Activated CD4-positive, alpha-beta memory T cell treated with anti-CD3 and anti-CD28 coated beads, Interleukin-2, amount 10 ng/mL, durations not matched to agents 7 days and 5 days (primary cell): ENCODE measurements at regions of chr2 and their contacts with region 1.

Region 1: DNA sequence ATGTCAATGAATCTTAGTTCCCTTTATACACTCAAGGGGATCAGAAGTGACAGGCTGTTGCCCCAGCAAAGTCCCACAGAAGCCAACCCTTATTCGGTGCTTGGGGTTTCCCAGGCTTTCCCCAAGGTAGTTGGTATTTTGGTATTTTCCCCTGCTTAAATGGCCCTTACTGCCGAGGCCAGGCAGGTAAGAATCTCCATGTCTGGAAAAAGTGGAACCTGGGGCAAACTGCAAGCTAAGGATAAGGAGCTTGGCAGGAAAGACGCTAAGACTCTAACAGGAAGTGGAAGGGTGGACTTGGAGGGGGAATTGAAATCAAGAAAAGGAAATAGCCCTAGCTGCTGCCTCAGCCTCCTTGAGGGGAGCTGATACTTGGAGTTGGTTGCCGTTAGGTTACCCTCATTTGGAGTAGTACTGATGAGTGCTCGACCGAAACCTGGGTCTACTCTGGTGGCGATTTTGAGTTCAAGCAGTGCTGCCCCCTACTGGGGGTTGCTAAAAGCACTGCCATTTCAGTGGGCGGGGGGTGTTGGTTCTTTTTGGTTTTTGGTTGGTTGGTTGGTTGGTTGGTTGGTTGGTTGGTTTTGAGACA is 3.3 kb upstream of the GPBAR1 start:
- DNase-seq: peak; percentile 75
- H3K4me3 Mint-ChIP-seq: no peak overlapping the region
- H3K27ac Mint-ChIP-seq: peak overlapping the region; percentile 83
- H3K4me1 Mint-ChIP-seq: peaks cover 39% of the 10 kb centered on the region
- H3K27me3 Mint-ChIP-seq: no peaks in the 10 kb centered on the region

Region 2: GRCh38 chr2:218186355-218186766 is 71.1 kb before region 1 on chr2:
- CTCF ChIA-PET with region 1: interaction called, 11 read pairs
- POLR2A ChIA-PET with region 1: interaction called, 4 read pairs
- DNase-seq: peak; percentile 75
- H3K4me3 Mint-ChIP-seq: no peak overlapping the region
- H3K27ac Mint-ChIP-seq: no peak overlapping the region
- H3K4me1 Mint-ChIP-seq: peaks cover 10% of the 10 kb centered on the region
- H3K27me3 Mint-ChIP-seq: peaks cover 8% of the 10 kb centered on the region

Region 3: GRCh38 chr2:218224186-218224585 is 33.3 kb before region 1 on chr2:
- CTCF ChIA-PET with region 1: interaction called, 24 read pairs
- POLR2A ChIA-PET with region 1: interaction called, 32 read pairs
- DNase-seq: no peak
- H3K4me3 Mint-ChIP-seq: peak overlapping the region; percentile 93
- H3K27ac Mint-ChIP-seq: peak overlapping the region; percentile 66
- H3K4me1 Mint-ChIP-seq: peaks cover 94% of the 10 kb centered on the region
- H3K27me3 Mint-ChIP-seq: no peaks in the 10 kb centered on the region

Region 4: GRCh38 chr2:218245214-218245613 is 12.3 kb before region 1 on chr2:
- CTCF ChIA-PET with region 1: interaction called, 9 read pairs
- POLR2A ChIA-PET with region 1: interaction called, 46 read pairs
- DNase-seq: no peak
- H3K4me3 Mint-ChIP-seq: no peak overlapping the region
- H3K27ac Mint-ChIP-seq: no peak overlapping the region
- H3K4me1 Mint-ChIP-seq: peaks cover 17% of the 10 kb centered on the region
- H3K27me3 Mint-ChIP-seq: no peaks in the 10 kb centered on the region

Region 5: DNA sequence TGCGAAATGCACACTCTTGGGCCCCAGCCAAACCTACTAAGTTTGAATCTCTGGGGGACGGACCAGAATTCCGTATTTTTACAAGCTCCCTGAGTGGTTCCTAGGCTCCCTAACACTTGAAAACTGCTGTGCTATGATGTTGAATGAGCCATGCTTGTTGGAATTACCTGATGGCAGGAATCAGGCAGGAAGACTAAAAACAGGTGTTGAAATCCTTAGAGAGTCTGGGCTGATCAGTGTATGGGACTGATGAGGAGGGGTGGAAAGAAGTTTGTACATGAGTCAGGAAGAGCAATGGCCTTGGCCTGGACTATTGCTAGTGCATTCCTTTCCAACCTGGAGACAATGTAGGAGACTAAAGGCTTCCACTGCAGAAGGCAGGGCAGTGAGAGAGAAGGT is 59.7 kb after region 1 on chr2:
- CTCF ChIA-PET with region 1: no interaction called
- POLR2A ChIA-PET with region 1: no interaction called
- DNase-seq: no peak
- H3K4me3 Mint-ChIP-seq: no peak overlapping the region
- H3K27ac Mint-ChIP-seq: peak overlapping the region; percentile 88
- H3K4me1 Mint-ChIP-seq: peaks cover 29% of the 10 kb centered on the region
- H3K27me3 Mint-ChIP-seq: peaks cover 2% of the 10 kb centered on the region